Activated T-helper 2 cell treated with anti-CD3 and anti-CD28 coated beads, Interferon-gamma antibody, Interleukin-2, Interleukin-4, amounts not matched to agents 10 μg/mL and 5 μg/mL and 100 μg/mL, durations not matched to agents 14 hours and 24 hours and 36 hours (primary cell): ENCODE measurements at regions of chr18 and their contacts with region 1.

Region 1: DNA sequence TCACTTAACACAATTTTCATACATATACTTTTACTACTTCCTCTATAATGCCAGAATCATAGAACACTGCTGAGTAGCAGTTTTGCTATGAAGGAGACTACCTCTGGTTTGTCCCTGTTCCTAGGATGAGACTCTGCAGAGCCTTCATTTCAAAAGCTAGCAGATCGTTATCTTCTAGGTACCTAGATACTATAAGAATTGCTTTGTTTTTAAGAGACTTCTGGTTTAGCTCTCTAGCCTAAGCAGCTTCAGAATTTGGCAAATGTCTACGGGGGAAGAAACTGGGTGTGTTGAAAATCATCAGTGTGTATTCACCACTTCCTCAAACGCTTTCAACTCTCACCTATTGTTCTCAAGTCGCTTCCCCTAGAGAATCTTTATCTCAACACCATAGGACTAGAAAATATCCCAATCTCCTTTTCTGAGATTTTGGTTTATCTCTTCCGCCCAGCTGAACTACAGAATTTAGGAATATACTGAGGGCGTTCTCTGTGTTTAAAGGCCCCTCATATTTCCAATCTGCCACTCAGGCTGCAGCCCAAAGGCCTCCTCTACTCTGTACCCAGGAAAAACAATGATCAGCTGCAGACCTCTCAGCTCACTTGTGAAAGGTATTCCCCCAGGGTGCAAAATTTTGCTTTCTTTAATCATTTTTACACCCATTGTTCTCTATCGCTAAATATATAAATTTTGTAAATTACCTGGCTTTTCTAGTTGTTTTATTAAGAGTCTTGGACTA is 28.7 kb downstream of the SMAD2 start:
- DNase-seq: no peak
- H3K4me3 Mint-ChIP-seq: peak overlapping the region; percentile 64
- H3K27ac Mint-ChIP-seq: peak overlapping the region; percentile 87
- H3K4me1 Mint-ChIP-seq: peaks cover 85% of the 10 kb centered on the region
- H3K27me3 Mint-ChIP-seq: no peaks in the 10 kb centered on the region

Region 2: GRCh38 chr18:47912343-47912742 is 10.6 kb after region 1 on chr18:
- intact Hi-C with region 1: loop called (anchors 1 kb)
- DNase-seq: no peak
- H3K4me3 Mint-ChIP-seq: peak overlapping the region; percentile 54
- H3K27ac Mint-ChIP-seq: peak overlapping the region; percentile 86
- H3K4me1 Mint-ChIP-seq: peaks cover 80% of the 10 kb centered on the region
- H3K27me3 Mint-ChIP-seq: no peaks in the 10 kb centered on the region

Region 3: DNA sequence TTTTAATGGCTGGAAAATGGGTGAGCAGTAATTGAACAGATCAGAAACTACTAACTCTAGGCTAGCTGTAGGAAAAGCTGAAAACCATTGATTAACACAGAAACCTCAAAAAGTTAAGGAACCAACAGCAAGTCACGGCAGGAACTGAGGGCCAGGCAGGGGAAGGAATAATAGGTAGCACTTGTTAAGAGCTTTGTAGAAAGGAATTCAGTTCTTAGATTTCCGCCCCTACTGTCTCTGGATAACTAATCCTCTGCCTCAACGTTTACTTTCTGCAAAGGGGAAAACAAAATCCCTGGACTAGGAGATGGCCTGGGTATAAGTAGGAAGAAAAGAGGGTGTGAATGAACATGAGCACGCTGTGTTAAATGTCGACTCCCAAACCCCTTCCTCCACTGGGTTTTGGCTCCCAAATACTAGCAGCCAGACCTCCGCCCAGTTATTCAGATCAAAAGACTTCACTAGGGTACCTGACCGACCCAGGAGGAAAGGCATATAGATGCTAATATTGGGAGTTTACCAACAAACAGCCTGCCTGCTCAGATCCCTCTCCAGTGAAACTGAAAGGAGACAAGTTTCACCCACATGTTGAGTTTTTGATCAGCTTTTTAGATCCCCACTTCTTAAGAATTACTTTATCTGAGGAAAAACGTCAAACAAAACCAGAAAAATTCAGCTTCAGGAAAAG is 16.3 kb after region 1 on chr18:
- intact Hi-C with region 1: loop called (anchors 2 kb)
- DNase-seq: no peak
- H3K4me3 Mint-ChIP-seq: peak overlapping the region; percentile 76
- H3K27ac Mint-ChIP-seq: peak overlapping the region; percentile 98
- H3K4me1 Mint-ChIP-seq: peaks cover 83% of the 10 kb centered on the region
- H3K27me3 Mint-ChIP-seq: no peaks in the 10 kb centered on the region